AG04450 (cell line): ENCODE measurements at regions of chr1 and their contacts with region 1.

Region 1: GRCh38 chr1:213829780-213830179 is 158.0 kb upstream of the PROX1 start:
- DNase-seq: no peak
- H3K4me3 ChIP-seq: no peak overlapping the region
- H3K27ac ChIP-seq: no peak overlapping the region
- H3K27me3 ChIP-seq: no peaks in the 10 kb centered on the region
- CTCF ChIP-seq: no peak

Region 2: DNA sequence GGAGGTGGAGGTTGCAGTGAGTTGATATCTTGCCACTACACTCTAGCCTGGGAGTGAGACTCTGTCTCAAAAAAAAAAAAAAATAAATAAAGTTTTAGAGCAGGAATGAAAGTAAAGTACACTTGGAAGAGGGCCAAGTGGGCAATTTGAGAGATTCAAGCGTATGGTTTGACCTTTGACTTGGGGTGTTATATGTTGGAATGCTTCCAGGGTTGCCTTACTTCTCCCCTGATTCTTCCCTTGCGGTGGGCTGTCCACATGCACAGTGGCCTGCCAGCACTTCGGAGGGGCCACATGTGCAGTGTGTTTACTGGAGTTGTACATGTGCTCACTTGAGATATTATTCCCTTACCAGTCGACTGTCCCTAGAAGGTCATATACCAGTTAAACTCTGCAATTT is 137.5 kb before region 1 on chr1:
- CTCF ChIA-PET with region 1: no interaction called
- POLR2A ChIA-PET with region 1: no interaction called
- DNase-seq: no peak
- H3K4me3 ChIP-seq: no peak overlapping the region
- H3K27ac ChIP-seq: no peak overlapping the region
- H3K27me3 ChIP-seq: no peaks in the 10 kb centered on the region
- CTCF ChIP-seq: no peak

Region 3: GRCh38 chr1:213779228-213779883 is 50.4 kb before region 1 on chr1:
- CTCF ChIA-PET with region 1: no interaction called
- POLR2A ChIA-PET with region 1: no interaction called
- DNase-seq: no peak
- H3K4me3 ChIP-seq: no peak overlapping the region
- H3K27ac ChIP-seq: no peak overlapping the region
- H3K27me3 ChIP-seq: no peaks in the 10 kb centered on the region
- CTCF ChIP-seq: no peak

Region 4: GRCh38 chr1:214018386-214019268 is 188.8 kb after region 1 on chr1:
- CTCF ChIA-PET with region 1: interaction called, 10 read pairs
- POLR2A ChIA-PET with region 1: no interaction called
- DNase-seq: no peak
- H3K4me3 ChIP-seq: no peak overlapping the region
- H3K27ac ChIP-seq: no peak overlapping the region
- H3K27me3 ChIP-seq: no peaks in the 10 kb centered on the region
- CTCF ChIP-seq: no peak